Mucosa of descending colon (tissue), 3 donors: ENCODE measurements at regions of chr12 and their contacts with region 1.

Region 1: DNA sequence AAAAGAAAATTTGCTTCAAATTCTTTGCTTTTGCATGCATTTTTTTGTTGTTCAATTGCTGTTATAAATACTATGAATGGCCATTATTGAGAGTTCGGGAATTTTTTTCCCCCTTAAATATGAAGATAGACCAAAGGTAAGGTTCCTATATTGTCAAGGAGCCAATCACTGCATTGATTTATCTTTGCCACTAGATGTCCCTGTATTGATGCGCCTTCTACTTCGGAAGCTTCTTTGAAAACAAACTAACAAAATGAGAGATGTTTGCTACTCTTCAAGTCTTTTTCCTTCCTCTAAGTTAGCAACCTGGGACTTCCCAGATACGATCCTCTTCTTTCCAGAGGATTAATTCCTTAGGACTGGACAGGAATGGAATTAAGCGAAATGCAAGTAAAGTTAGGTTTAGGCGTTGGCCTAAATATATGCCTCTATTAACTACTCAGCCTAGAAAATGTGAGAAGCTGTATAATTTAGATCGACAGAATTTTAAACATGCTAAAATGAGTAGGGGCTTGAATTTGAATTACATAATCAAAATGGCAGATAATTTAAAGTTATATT is 318.1 kb downstream of the AEBP2 start:
- DNase-seq: no peak
- ATAC-seq: peak; percentile 54
- H3K4me3 ChIP-seq: no peak overlapping the region
- H3K4me1 ChIP-seq: no peaks in the 10 kb centered on the region
- CTCF ChIP-seq: peak; percentile 8

Region 2: GRCh38 chr12:19694627-19695026 is 62.8 kb before region 1 on chr12:
- intact Hi-C with region 1: no loop called
- DNase-seq: no peak
- ATAC-seq: no peak
- H3K4me3 ChIP-seq: no peak overlapping the region
- H3K4me1 ChIP-seq: no peaks in the 10 kb centered on the region
- CTCF ChIP-seq: no peak

Region 3: GRCh38 chr12:19908825-19909224 is 151.4 kb after region 1 on chr12:
- intact Hi-C with region 1: loop called in 1 of 2 experiments (anchors 10 kb)
- DNase-seq: no peak
- ATAC-seq: no peak
- H3K4me3 ChIP-seq: no peak overlapping the region
- H3K4me1 ChIP-seq: no peaks in the 10 kb centered on the region
- CTCF ChIP-seq: no peak

Region 4: DNA sequence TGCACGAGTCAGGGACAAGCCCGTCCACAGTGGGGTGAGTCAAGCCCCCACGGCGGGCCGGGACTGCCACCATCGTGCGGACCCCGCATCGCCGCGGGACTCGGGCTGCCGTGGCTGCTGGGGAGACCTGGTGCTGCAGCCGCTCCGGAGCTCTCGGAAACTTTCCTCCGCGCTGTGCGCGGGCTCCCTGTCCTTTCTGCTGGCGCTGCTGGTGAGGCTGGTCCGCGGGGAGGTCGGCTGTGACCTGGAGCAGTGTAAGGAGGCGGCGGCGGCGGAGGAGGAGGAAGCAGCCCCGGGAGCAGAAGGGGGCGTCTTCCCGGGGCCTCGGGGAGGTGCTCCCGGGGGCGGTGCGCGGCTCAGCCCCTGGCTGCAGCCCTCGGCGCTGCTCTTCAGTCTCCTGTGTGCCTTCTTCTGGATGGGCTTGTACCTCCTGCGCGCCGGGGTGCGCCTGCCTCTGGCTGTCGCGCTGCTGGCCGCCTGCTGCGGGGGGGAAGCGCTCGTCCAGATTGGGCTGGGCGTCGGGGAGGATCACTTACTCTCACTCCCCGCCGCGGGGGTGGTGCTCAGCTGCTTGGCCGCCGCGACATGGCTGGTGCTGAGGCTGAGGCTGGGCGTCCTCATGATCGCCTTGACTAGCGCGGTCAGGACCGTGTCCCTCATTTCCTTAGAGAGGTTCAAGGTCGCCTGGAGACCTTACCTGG is 612.1 kb after region 1 on chr12:
- intact Hi-C with region 1: loop called in 1 of 2 experiments (anchors 10 kb)
- DNase-seq: peak; percentile 77 to 88 (median 86)
- ATAC-seq: peak; percentile 76
- H3K4me3 ChIP-seq: peak overlapping the region; percentile 43
- H3K4me1 ChIP-seq: no peaks in the 10 kb centered on the region
- CTCF ChIP-seq: no peak